ENCODE measurements at regions of chr1 and their contacts with region 1.

Region 1: GRCh38 chr1:155001675-155002463 is 733 bp upstream of the ZBTB7B start:
- DNase-seq: peak; percentile 99
- ATAC-seq: peak; percentile 72
- H3K4me3 ChIP-seq: peak overlapping the region; percentile 85 to 98
- H3K27ac ChIP-seq: peak overlapping the region; percentile 99
- H3K4me1 ChIP-seq: peaks cover 22 to 66% of the 10 kb centered on the region in 2 experiments
- H3K27me3 ChIP-seq: no peaks in the 10 kb centered on the region
- CTCF ChIP-seq: peak in 2 of 3 experiments; percentile 52; a peak in 4 of 6 replicates
- POLR2A ChIP-seq: no peak
- RAD21 ChIP-seq: no peak

Region 2: GRCh38 chr1:154961497-154962262 is 40.2 kb before region 1 on chr1 and contains the start of gene PYGO2:
- CTCF ChIA-PET with region 1: interaction called, 10 read pairs
- POLR2A ChIA-PET with region 1: no interaction called
- RAD21 ChIA-PET with region 1: interaction called in 1 of 2 experiments, 5 read pairs
- intact Hi-C with region 1: loop called (anchors 5 kb)
- DNase-seq: no peak
- ATAC-seq: peak; percentile 85
- H3K4me3 ChIP-seq: peak within 1 kb of the TSS; percentile 64 to 80
- H3K27ac ChIP-seq: peak within 1 kb of the TSS; percentile 92
- H3K4me1 ChIP-seq: peaks cover 18 to 48% of the 10 kb centered on the region in 2 experiments
- H3K27me3 ChIP-seq: no peaks in the 10 kb centered on the region
- CTCF ChIP-seq: peak in 2 of 3 experiments; percentile 32 to 54; a peak in 3 of 6 replicates
- POLR2A ChIP-seq: peak; percentile 65
- RAD21 ChIP-seq: no peak; the same call in 1 of the 2 replicates
- total RNA-seq, gene PYGO2: 37.2 TPM

Region 3: GRCh38 chr1:154982897-154983648 is 18.8 kb before region 1 on chr1 and contains the start of gene FLAD1:
- CTCF ChIA-PET with region 1: interaction called, 25 read pairs
- POLR2A ChIA-PET with region 1: interaction called, 4 read pairs
- RAD21 ChIA-PET with region 1: no interaction called
- intact Hi-C with region 1: no loop called
- DNase-seq: peak; percentile 100
- ATAC-seq: peak; percentile 99
- H3K4me3 ChIP-seq: peak within 1 kb of the TSS; percentile 84 to 92
- H3K27ac ChIP-seq: peak within 1 kb of the TSS; percentile 70
- H3K4me1 ChIP-seq: peaks cover 10 to 29% of the 10 kb centered on the region in 2 experiments; a peak in 3 of 4 replicates
- H3K27me3 ChIP-seq: no peaks in the 10 kb centered on the region
- CTCF ChIP-seq: no peak
- POLR2A ChIP-seq: peak; percentile 77
- RAD21 ChIP-seq: no peak
- total RNA-seq, gene FLAD1: 58.4 TPM

Region 4: DNA sequence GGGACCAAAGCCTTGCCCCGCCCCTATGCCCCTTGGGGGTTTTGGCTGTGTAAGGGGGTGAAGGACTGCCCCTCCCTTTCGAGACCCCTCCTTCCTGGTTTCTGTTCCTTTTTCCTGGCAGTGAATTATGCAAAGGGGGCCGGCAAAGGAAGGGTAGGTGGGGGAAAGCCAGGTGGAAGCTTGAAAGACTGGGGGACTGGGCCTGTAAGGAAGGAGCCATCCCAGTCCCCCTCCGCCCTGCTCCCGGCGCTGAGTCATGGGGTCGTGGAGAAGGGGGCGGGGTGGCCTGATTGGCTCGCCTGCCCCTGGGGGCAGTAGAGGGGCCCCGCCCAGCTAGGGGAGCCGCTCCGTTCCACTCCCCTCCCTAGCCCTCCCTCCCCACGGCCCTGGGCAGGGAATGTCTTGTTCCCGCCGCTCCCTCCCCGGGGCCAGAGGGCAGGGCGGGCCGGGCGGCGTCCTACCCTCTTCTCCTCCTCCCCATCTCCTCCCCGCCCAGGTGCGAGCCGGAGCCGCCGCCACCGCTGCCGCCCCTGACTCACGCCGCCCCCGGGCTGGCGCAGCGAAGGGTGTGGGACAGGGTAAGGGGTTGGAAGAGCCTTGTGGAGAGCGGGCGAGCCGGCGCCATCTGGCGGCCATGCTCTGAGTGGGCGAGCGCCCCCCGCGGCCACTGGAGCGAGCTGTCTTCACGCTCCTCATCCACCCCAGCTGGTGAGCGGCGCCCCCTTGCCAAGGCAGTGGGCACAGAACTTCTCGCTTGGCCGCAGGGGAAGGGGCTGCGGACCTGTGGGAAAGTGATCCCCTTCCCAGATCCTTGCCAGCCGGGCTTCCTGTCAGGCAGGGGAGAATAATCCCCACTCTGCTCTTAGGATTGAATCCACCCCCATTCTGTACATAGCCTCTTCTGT is 15.4 kb after region 1 on chr1:
- CTCF ChIA-PET with region 1: interaction called, 11 read pairs
- POLR2A ChIA-PET with region 1: interaction called, 7 read pairs
- RAD21 ChIA-PET with region 1: no interaction called
- intact Hi-C with region 1: loop called (anchors 2 kb)
- DNase-seq: peak; percentile 87
- ATAC-seq: peak; percentile 86
- H3K4me3 ChIP-seq: peak overlapping the region; percentile 27 to 47
- H3K27ac ChIP-seq: peak overlapping the region; percentile 89
- H3K4me1 ChIP-seq: peaks cover 30 to 62% of the 10 kb centered on the region in 2 experiments
- H3K27me3 ChIP-seq: no peaks in the 10 kb centered on the region
- CTCF ChIP-seq: peak; percentile 99 to 100 (median 100)
- POLR2A ChIP-seq: no peak
- RAD21 ChIP-seq: peak; percentile 86

Region 5: DNA sequence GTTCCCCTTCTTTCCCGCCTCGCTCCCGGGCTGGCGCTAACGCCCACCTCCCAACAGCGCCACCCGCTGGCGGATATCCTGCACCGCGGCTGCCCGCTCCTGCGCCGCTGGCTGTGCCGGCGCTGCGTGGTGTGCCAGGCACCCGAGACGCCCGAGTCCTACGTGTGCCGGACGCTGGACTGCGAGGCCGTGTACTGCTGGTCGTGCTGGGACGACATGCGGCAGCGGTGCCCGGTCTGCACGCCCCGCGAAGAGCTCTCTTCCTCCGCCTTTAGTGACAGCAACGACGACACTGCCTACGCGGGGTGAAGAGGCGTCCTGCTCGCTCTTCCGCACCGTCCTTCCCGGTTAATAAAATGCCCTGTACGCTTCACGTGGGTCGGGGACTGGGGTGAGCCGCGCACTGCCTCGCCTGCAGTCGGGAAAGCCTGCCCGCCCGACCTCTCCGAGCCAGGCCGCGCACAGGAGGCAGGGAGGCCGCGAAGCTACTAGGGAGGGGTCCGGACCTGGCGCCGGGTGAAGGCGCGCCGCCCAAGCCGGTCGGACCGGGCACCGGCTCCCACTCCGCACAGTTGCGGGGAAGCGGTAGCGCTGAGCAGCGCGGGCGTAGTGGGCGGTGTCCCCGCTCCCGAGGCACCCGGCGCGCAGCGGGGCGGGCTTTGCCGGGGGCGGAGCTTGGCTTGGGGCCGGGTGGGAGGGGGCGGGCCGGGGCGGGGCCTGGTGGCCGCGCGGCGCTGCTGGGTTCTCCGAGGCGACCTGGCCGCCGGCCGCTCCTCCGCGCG is 48.9 kb after region 1 on chr1 and contains the start of gene ADAM15:
- CTCF ChIA-PET with region 1: interaction called, 7 read pairs
- POLR2A ChIA-PET with region 1: no interaction called
- RAD21 ChIA-PET with region 1: no interaction called
- intact Hi-C with region 1: loop called (anchors 5 kb)
- DNase-seq: peak; percentile 54
- ATAC-seq: peak; percentile 78
- H3K4me3 ChIP-seq: peak within 1 kb of the TSS; percentile 90 to 94
- H3K27ac ChIP-seq: peak within 1 kb of the TSS; percentile 93
- H3K4me1 ChIP-seq: peaks cover 13 to 41% of the 10 kb centered on the region in 2 experiments
- H3K27me3 ChIP-seq: no peaks in the 10 kb centered on the region
- CTCF ChIP-seq: peak in 2 of 3 experiments; percentile 93 to 94; a peak in 4 of 6 replicates
- POLR2A ChIP-seq: no peak
- RAD21 ChIP-seq: no peak
- total RNA-seq, gene ADAM15: 149 TPM